ENCODE measurements at regions of chr1 and their contacts with region 1.

Region 1: DNA sequence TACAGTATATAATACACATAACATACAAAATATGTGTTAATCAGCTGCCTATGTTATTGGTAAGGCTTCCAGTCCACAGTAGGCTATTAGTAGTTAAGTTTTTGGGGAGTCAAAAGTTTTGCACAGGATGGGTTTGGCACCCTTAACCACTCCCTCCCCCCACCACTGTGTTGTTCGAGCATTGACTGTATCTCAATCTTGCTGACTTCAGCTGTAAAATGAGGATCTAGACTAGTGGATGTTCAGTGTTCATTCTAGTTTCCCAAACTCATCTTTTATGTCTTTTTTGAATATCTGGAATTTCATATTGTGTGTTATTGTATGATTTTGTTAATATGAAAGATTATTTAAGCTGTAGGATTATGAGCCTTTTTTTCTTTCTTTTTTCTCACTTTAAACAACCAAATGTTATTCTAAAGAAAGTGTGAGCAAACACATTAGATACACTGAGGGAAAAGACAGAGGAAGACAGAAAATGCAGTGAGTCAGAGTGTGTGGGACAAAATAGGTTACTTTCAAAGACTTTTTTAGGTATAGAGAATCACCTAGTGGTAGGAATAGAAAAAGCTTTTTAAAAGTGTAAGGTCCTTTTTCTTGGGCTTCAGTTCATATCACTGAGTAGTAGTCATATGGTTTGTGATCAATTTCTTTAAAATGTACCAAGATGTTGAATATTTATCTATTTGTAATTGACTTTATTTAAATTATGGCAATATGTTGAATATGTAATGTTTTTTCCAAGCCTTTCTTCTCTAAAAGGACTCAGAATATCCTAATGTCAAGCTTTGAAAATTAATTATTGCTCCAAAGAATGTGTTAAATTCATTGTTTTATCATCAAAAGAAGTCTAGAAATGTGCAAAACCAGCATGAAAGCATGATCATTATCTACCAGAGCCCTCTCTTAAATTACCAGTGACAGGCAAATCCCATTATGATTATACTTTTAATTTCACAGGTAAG is 17.9 kb upstream of the CENPF start:
- DNase-seq: no peak
- H3K4me3 ChIP-seq: no peak overlapping the region
- CTCF ChIP-seq: peak; percentile 45

Region 2: DNA sequence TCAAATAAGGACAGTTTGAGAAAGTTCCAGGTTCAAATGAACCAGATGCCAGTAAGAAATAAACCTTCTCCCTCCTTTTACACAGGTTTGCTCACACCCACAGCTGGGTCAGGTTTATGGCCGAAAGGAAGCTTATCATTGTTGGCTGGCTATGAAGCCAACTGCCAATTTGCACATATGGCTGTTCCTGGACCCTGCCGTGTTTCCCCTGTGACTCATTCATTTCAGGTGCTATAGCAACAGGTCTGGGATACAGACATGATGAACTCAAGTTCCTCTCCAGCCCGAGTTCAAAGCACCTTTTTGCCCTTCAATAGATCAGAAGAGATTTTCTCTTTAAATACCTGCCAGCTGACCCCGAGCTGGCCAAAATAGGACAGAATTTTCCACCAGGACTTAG is 438.6 kb before region 1 on chr1:
- CTCF ChIA-PET with region 1: no interaction called
- POLR2A ChIA-PET with region 1: no interaction called
- DNase-seq: no peak
- H3K4me3 ChIP-seq: no peak overlapping the region
- CTCF ChIP-seq: no peak

Region 3: DNA sequence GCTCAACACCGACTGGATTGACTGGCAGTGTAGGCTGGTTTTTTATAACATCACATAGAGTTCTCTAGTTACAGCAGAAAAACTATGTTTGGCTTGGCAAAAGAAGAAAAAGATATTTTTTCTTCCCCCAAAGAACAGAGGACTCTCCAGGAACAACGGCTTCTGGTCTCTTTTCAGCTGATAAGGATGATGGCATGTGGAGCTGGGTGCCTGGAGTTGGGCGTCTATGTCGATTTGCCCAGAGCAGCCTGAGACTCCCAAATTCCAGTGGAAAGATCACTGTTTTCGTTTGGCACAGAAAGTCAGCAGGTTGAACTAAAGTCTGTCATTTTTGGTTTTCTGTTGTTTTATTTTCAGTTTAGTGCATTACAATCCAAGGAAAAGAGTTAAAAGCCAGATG is 213.0 kb before region 1 on chr1:
- CTCF ChIA-PET with region 1: interaction called, 10 read pairs
- POLR2A ChIA-PET with region 1: no interaction called
- DNase-seq: no peak
- H3K4me3 ChIP-seq: no peak overlapping the region
- CTCF ChIP-seq: no peak

Region 4: GRCh38 chr1:214404154-214404553 is 180.9 kb before region 1 on chr1:
- CTCF ChIA-PET with region 1: interaction called, 10 read pairs
- POLR2A ChIA-PET with region 1: no interaction called
- DNase-seq: no peak
- H3K4me3 ChIP-seq: no peak overlapping the region
- CTCF ChIP-seq: no peak

Region 5: GRCh38 chr1:214494706-214495105 is 90.4 kb before region 1 on chr1:
- CTCF ChIA-PET with region 1: interaction called, 12 read pairs
- POLR2A ChIA-PET with region 1: no interaction called
- DNase-seq: no peak
- H3K4me3 ChIP-seq: no peak overlapping the region
- CTCF ChIP-seq: no peak

Region 6: DNA sequence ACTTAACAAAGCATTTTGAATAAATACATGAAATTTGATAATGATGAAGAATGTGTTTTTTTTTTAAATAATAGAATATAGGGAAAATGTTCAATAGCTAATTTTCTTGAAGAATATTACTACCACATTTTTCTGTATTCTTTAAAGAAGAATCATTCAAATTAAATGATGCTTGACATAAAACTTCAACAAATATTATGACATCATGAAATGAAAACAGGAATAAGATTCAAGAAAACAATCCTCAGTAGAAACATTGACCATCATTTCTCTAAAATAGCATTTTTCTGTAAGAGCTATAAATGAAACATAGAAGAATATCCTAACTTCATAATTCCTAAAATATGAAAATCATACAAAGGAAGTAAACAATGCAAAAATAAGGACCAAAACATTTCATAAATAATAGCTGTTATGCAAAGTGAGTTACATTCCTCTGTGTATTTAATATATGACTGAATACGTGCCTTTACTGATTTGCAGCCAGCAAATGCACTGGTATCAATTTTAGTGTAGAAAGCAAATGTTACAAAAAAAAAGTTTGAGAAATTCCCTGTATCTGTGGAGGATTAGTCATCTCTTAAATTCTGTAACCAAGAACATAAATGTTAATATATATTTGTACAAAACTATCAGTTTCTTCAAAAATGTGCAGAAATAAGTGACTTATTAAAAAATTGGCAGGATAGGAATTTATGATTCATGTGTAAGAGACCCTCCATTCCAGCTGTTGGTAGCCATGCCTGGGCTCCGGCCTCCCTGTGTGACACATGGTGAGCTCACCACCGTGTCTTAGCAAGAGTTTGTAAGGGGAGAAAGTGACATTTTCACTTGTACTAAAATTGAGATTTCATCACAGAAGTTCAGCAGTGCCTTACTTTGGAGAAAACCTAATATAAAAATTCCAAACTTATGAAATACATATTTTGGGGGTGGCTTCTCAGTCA is 18.7 kb before region 1 on chr1:
- CTCF ChIA-PET with region 1: interaction called, 12 read pairs
- POLR2A ChIA-PET with region 1: no interaction called
- DNase-seq: no peak
- H3K4me3 ChIP-seq: no peak overlapping the region
- CTCF ChIP-seq: no peak

Region 7: GRCh38 chr1:214632091-214632490 is 47.0 kb after region 1 on chr1:
- CTCF ChIA-PET with region 1: interaction called, 18 read pairs
- POLR2A ChIA-PET with region 1: no interaction called
- DNase-seq: no peak
- H3K4me3 ChIP-seq: no peak overlapping the region
- CTCF ChIP-seq: no peak

Region 8: DNA sequence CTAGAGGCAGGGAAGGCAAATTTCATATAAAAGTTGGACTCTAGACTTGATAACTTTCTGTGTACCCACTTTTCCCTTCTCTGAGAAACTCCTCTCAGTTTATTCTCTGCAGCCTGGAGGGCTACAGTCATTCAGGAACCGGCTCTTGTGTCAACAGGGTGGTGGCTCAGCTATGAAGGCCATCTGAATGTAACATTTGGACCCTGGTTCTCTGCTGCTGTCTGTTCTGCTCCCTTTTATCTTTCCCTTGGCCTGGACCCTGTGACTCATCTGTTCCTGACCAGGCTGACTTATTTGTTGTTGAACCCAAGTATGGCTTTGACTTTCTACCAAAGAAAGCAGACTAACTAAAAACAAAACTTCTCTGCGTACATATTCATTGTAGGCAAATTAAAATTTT is 93.3 kb after region 1 on chr1:
- CTCF ChIA-PET with region 1: no interaction called
- POLR2A ChIA-PET with region 1: no interaction called
- DNase-seq: no peak
- H3K4me3 ChIP-seq: no peak overlapping the region
- CTCF ChIP-seq: no peak

Measured in AG04449 (cell line).